ENCODE measurements at regions of chr14 and their contacts with region 1.

Region 1: GRCh38 chr14:71651228-71651627 is 281.0 kb upstream of the RGS6 start:
- DNase-seq: no peak
- ATAC-seq: no peak
- H3K4me3 ChIP-seq: no peak overlapping the region
- H3K27ac ChIP-seq: no peak overlapping the region
- H3K4me1 ChIP-seq: no peaks in the 10 kb centered on the region
- H3K27me3 ChIP-seq: no peaks in the 10 kb centered on the region
- CTCF ChIP-seq: no peak
- EP300 ChIP-seq: no peak
- POLR2A ChIP-seq: no peak
- RAD21 ChIP-seq: no peak

Region 2: GRCh38 chr14:71094722-71095121 is 556.5 kb before region 1 on chr14:
- CTCF ChIA-PET with region 1: no interaction called
- POLR2A ChIA-PET with region 1: no interaction called
- RAD21 ChIA-PET with region 1: no interaction called
- SMC1A ChIA-PET with region 1: no interaction called
- in situ Hi-C with region 1: no loop called
- intact Hi-C with region 1: no loop called
- DNase-seq: no peak
- ATAC-seq: peak; percentile 71
- H3K4me3 ChIP-seq: no peak overlapping the region
- H3K27ac ChIP-seq: no peak overlapping the region
- H3K4me1 ChIP-seq: no peaks in the 10 kb centered on the region
- H3K27me3 ChIP-seq: no peaks in the 10 kb centered on the region
- CTCF ChIP-seq: no peak
- EP300 ChIP-seq: no peak
- POLR2A ChIP-seq: no peak
- RAD21 ChIP-seq: no peak

Region 3: DNA sequence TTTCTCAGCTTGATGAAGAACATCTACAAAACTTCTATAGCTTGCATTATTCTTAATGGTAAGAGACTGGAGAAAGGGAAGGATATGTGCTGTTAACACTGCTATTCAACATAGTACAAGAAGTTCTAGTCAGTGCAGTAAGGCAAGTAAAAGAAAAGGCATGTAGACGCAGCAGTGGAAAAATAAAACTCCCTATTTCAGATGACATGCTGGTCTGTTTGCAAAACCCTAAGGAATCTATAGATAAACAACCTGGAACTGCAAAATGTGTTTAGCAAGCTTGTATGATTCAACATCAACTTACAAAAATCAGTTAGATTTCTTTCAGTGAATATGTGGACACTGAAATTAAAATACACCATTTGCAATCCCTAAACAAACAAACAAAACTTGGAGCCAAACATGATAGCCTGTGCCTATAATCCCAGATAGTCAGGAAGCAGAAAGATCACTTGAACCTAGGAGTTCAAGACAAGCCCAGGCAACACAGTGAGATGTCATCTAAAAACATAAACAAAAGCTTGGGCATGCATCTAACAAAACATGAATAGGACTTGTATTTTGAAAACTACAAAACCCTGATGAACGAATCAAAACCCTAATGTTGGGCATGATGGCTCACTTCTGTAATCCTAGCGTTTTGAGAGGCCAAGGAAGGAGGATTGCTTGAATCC is 12.6 kb before region 1 on chr14:
- CTCF ChIA-PET with region 1: no interaction called
- POLR2A ChIA-PET with region 1: interaction called, 6 read pairs
- RAD21 ChIA-PET with region 1: interaction called, 3 read pairs
- SMC1A ChIA-PET with region 1: interaction called, 10 read pairs
- in situ Hi-C with region 1: no loop called
- intact Hi-C with region 1: no loop called
- DNase-seq: no peak
- ATAC-seq: no peak
- H3K4me3 ChIP-seq: no peak overlapping the region
- H3K27ac ChIP-seq: no peak overlapping the region
- H3K4me1 ChIP-seq: peaks cover 11% of the 10 kb centered on the region
- H3K27me3 ChIP-seq: no peaks in the 10 kb centered on the region
- CTCF ChIP-seq: no peak
- EP300 ChIP-seq: no peak
- POLR2A ChIP-seq: no peak
- RAD21 ChIP-seq: no peak